ENCODE measurements at regions of chr9 and their contacts with region 1.

Region 1: GRCh38 chr9:77848897-77849296 is 182.7 kb downstream of the GNAQ start:
- DNase-seq: peak; percentile 70 to 94
- H3K4me3 ChIP-seq: no peak overlapping the region
- H3K27ac ChIP-seq: peak overlapping the region; percentile 92 to 94
- H3K4me1 ChIP-seq: peaks cover 17 to 49% of the 10 kb centered on the region in 2 donors
- H3K27me3 ChIP-seq: no peaks in the 10 kb centered on the region
- CTCF ChIP-seq: no peak

Region 2: DNA sequence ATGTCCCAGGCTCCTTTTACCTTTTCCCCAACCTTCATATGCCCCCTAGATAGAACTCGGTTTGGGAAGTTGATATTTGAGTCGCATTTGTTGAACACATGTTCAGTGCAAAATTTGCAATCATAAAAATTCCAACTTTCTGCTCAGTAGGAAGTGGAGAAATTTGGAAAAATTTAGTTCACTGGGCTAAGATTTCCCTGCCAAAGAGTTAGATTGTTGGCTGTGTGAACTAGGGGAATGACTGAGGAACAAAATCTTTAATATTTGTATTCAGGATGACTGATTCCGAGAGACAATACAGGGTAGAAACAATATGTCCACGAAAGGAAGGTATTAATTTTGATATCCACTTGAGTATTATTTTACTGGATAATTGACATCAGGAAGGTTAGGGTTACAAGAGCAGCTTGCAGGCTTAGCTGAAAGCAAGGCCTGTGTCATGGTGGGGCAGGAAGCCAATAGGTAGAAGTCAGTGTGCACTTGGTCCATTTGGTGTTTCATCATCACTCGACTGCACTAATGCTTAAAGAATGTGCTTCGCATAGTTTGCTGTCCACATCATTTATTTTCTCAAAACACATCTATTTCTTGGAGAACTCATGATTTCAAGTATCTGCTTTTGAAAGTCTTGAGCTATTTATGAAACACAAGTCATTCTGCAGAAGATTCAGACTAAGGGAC is 141.4 kb before region 1 on chr9:
- intact Hi-C with region 1: loop called (anchors 2 kb)
- DNase-seq: peak in 1 of 2 donors; percentile 93
- H3K4me3 ChIP-seq: no peak overlapping the region
- H3K27ac ChIP-seq: peak overlapping the region; percentile 54 to 69
- H3K4me1 ChIP-seq: peaks cover 0 to 13% of the 10 kb centered on the region in 2 donors
- H3K27me3 ChIP-seq: no peaks in the 10 kb centered on the region
- CTCF ChIP-seq: no peak

Region 3: GRCh38 chr9:77807281-77807683 is 41.6 kb before region 1 on chr9:
- intact Hi-C with region 1: loop called (anchors 5 kb)
- DNase-seq: no peak
- H3K4me3 ChIP-seq: no peak overlapping the region
- H3K27ac ChIP-seq: peak overlapping the region in 1 of 2 donors; percentile 17
- H3K4me1 ChIP-seq: no peaks in the 10 kb centered on the region
- H3K27me3 ChIP-seq: no peaks in the 10 kb centered on the region
- CTCF ChIP-seq: no peak

Region 4: DNA sequence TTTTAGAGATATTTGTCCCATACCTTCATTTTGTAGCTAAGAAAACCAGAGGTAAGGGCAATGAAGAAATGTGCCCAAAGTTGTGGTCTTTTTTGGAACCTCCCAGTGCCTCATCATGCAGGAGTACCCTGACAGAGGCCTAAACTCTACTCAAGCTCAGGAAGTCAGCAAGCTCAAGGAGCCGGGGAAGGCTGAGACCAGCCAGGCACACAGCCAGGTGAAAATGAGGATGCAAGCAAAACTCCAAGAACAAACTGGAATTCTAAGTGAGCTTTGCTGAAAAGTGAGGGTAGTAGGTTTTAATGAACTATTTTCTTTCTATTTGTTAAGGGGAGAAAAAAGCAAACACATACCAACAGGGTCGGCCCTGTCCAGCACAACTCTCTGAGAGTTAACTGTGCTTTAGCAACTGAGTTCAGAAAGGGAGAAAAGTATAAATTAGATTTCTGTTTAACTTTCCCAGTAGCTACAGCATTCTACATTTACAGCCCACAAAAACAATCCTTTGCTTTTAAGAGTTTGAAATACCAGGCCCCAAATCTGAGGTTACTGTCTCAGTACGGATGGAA is 36.3 kb after region 1 on chr9:
- intact Hi-C with region 1: loop called (anchors 5 kb)
- DNase-seq: no peak
- H3K4me3 ChIP-seq: no peak overlapping the region
- H3K27ac ChIP-seq: peak overlapping the region; percentile 57 to 58
- H3K4me1 ChIP-seq: peaks cover 0 to 14% of the 10 kb centered on the region in 2 donors
- H3K27me3 ChIP-seq: no peaks in the 10 kb centered on the region
- CTCF ChIP-seq: no peak

Region 5: DNA sequence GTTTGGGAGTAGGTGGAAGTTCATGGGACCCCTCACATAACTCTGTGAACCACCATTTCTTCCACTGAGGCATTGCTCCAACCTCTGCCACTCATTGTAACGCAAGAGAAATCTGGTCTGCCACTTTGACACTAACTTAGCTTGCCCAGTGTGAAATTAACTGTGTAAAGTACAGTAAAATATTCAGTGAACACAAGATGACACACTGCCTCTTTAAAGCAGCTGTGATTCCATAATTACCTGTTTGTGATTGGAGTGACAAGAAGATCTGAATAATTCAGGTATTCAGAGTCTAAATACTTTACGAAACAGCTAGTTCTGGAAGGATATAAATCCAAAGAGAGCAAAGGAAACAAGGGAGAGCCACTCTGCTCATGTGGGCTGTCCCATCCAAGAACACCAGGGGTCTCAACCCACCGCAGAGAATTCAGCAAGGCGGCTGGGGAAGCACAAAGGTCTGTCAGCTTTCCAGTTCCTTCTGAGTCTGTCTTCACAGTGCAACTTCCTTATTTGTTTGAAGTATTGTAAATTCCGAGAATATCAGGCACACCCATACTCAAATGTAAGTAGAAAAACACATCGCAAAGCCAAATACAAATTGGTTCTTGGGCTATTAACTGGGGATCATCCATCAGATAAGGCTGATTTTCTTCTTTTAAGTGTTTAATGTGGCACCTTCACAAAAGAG is 95.8 kb after region 1 on chr9:
- intact Hi-C with region 1: loop called (anchors 5 kb)
- DNase-seq: no peak
- H3K4me3 ChIP-seq: no peak overlapping the region
- H3K27ac ChIP-seq: peak overlapping the region; percentile 58 to 77
- H3K4me1 ChIP-seq: peaks cover 6 to 55% of the 10 kb centered on the region in 2 donors
- H3K27me3 ChIP-seq: no peaks in the 10 kb centered on the region
- CTCF ChIP-seq: no peak

Measured in ascending aorta (tissue), 2 donors.